ENCODE measurements at regions of chr10 and their contacts with region 1.

Region 1: DNA sequence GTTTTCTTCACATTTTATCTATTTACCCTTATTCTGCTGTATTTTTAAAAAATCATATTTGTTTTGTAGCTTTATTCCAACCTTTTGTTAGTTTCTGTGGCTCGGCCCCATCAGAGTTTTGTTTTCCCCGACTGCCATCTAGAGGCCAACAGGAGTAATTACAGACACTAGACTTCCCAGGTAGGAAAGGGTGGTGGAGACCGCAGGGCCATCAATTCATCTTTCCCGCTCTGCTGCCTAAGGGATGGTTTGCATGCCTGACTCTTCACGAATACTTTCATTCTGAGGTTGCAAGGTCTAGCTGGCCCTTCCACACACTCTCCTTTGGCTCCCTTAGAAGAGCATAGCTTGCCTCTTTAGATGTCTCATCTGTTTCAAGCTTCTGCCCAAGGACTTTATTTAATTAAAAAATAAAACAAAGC is 38.3 kb downstream of the LYZL2 start:
- DNase-seq: peak; percentile 27 to 34
- H3K4me3 ChIP-seq: no peak overlapping the region
- H3K27ac ChIP-seq: no peak overlapping the region
- H3K4me1 ChIP-seq: no peaks in the 10 kb centered on the region
- H3K27me3 ChIP-seq: no peaks in the 10 kb centered on the region
- CTCF ChIP-seq: peak; percentile 73 to 87 (median 79)
- POLR2A ChIP-seq: no peak

Region 2: GRCh38 chr10:30398788-30399187 is 192.5 kb before region 1 on chr10:
- intact Hi-C with region 1: loop called (anchors 5 kb)
- DNase-seq: no peak
- H3K4me3 ChIP-seq: no peak overlapping the region
- H3K27ac ChIP-seq: no peak overlapping the region
- H3K4me1 ChIP-seq: no peaks in the 10 kb centered on the region
- H3K27me3 ChIP-seq: no peaks in the 10 kb centered on the region
- CTCF ChIP-seq: no peak
- POLR2A ChIP-seq: no peak

Region 3: DNA sequence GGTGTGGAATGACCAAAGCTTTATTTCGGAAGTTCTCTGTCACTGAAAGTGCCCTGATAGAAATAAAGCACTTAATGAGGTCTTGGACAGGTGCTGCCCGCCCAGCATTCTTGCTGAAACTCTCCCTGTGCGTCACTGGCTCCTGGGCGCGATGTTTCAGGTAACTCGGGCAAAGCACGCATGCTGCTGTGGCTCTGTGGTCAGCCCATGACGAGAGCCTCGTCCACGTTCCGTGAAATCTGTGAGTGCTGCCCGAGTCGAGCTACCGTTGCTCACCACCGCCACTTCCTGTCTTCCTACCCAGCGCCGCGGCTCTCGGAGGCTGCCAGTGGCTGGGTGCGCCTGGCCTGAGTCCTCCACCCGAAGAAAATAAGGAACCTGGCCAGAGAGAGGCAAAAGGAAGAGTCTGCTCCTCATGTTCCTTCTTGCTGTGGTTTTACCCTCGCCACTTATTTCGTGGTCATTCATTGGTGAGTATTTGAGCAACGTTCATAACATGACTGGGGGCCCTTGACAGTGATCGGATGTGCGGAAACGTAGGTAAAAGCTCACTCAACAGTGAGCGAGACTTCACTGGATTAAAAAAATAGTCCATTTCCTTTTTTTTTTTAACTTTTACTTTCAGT is 61.8 kb before region 1 on chr10:
- intact Hi-C with region 1: no loop called
- DNase-seq: peak; percentile 21 to 27
- H3K4me3 ChIP-seq: no peak overlapping the region
- H3K27ac ChIP-seq: no peak overlapping the region
- H3K4me1 ChIP-seq: no peaks in the 10 kb centered on the region
- H3K27me3 ChIP-seq: no peaks in the 10 kb centered on the region
- CTCF ChIP-seq: no peak
- POLR2A ChIP-seq: no peak